ENCODE measurements at regions of chr5 and their contacts with region 1.

Region 1: GRCh38 chr5:54867310-54867944 is 118.0 kb downstream of the ESM1 start:
- DNase-seq: peak; percentile 56
- CTCF ChIP-seq: peak; percentile 41

Region 2: GRCh38 chr5:54249210-54250028 is 618.0 kb before region 1 on chr5:
- in situ Hi-C with region 1: loop called (anchors 25 kb)
- DNase-seq: peak; percentile 15
- CTCF ChIP-seq: no peak

Region 3: GRCh38 chr5:54820346-54821134 is 46.9 kb before region 1 on chr5:
- in situ Hi-C with region 1: no loop called
- DNase-seq: no peak
- CTCF ChIP-seq: no peak